GM10248 (cell line): ENCODE measurements at regions of chr16 and their contacts with region 1.

Region 1: GRCh38 chr16:75622761-75623605 is at the start of gene ADAT1:
- DNase-seq: peak; percentile 96
- CTCF ChIP-seq: no peak

Region 2: DNA sequence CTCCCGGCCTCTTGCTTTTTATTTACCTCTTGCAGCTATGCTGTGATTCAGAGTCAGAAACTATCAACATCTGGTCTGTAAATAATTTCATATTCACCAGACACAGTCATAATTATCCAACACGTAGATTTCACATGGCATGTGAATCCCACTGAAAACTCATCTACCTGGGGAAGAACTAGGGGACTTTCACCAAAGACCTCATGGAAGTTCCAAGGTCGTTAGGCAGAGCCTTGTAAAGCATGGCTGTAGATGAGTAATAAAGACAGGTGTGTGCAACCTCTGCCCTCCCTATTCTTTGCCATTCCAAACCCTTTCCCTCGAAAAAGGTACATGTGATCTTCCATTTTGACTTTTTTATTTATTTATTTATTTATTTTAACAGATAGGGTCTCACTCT is 85.2 kb before region 1 on chr16:
- CTCF ChIA-PET with region 1: no interaction called
- POLR2A ChIA-PET with region 1: no interaction called
- DNase-seq: no peak
- CTCF ChIP-seq: no peak

Region 3: DNA sequence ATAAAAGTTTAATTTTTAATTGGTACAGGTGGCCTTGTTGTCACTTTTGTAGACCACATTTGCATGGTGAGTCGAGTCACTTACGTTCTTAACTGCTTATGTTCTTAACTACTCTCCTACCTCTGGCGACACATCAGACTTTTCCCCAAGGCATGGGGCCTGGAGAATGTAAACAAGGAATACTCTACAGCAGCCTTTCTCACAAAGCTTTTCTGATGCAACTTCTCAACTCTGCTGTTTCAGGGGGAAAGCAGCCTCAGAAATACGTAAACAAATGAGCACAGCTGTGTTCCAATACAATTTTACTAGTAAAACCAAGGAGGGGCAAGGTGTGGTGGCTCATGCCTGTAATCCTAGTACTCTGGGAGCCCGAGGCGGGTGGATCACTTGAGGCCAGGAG is 17.6 kb after region 1 on chr16:
- CTCF ChIA-PET with region 1: interaction called, 11 read pairs
- POLR2A ChIA-PET with region 1: no interaction called
- DNase-seq: no peak
- CTCF ChIP-seq: no peak

Region 4: GRCh38 chr16:75647492-75648264 is 24.7 kb after region 1 on chr16 and contains the starts of genes KARS1 and TERF2IP:
- CTCF ChIA-PET with region 1: interaction called, 11 read pairs
- POLR2A ChIA-PET with region 1: interaction called, 12 read pairs
- DNase-seq: peak; percentile 96
- CTCF ChIP-seq: no peak

Region 5: DNA sequence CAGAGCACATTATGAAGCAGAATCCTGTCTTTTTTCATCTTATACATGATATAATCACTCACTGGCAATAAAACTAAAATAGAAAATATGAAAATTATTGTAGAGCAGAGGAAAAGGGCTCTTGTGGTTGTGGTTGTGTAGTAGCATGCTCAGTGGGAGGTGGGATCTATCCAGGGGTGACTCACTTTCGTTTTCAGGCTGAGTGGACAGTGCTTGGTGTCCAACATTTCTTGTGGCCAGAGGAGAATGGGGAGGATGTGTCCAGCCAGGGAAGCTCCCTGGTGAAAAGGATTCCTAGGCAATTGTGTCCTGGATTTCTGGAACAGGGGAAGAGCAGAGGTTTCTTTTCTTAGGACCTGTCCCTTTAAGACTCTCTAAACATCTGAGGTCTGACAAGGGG is 135.2 kb after region 1 on chr16:
- CTCF ChIA-PET with region 1: no interaction called
- POLR2A ChIA-PET with region 1: no interaction called
- DNase-seq: no peak
- CTCF ChIP-seq: no peak